Panc1 (cell line): ENCODE measurements at regions of chr12 and their contacts with region 1.

Region 1: GRCh38 chr12:43113135-43113534 is 438.9 kb downstream of the ADAMTS20 start:
- DNase-seq: no peak
- ATAC-seq: no peak
- H3K4me3 ChIP-seq: no peak overlapping the region
- H3K27ac ChIP-seq: no peak overlapping the region
- H3K4me1 ChIP-seq: no peaks in the 10 kb centered on the region
- H3K27me3 ChIP-seq: no peaks in the 10 kb centered on the region
- CTCF ChIP-seq: no peak

Region 2: DNA sequence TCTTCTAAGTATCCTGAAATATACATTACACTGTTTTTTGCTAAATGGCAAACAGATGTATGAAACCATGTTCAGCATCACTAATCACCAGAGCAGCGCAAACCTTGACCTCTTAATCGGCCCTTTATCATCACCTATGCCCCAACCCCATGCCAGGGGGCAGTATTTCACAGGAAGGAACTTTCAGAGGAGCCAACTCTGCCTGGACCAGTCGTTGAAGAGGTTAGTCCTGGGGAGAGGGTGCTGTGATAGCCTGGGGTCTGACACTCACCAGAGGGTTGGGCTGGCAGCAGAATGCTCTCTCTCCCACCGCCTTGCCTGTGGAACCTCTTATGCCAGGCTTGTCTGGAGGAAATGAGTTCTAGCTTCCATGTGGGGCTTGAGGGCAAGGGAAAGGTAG is 1134.5 kb after region 1 on chr12:
- CTCF ChIA-PET with region 1: no interaction called
- POLR2A ChIA-PET with region 1: interaction called, 10 read pairs
- in situ Hi-C with region 1: no loop called
- intact Hi-C with region 1: no loop called
- DNase-seq: no peak
- ATAC-seq: no peak
- H3K4me3 ChIP-seq: no peak overlapping the region
- H3K27ac ChIP-seq: no peak overlapping the region
- H3K4me1 ChIP-seq: no peaks in the 10 kb centered on the region
- H3K27me3 ChIP-seq: no peaks in the 10 kb centered on the region
- CTCF ChIP-seq: no peak